Mammary epithelial cell (primary cell): ENCODE measurements at regions of chr14 and their contacts with region 1.

Region 1: DNA sequence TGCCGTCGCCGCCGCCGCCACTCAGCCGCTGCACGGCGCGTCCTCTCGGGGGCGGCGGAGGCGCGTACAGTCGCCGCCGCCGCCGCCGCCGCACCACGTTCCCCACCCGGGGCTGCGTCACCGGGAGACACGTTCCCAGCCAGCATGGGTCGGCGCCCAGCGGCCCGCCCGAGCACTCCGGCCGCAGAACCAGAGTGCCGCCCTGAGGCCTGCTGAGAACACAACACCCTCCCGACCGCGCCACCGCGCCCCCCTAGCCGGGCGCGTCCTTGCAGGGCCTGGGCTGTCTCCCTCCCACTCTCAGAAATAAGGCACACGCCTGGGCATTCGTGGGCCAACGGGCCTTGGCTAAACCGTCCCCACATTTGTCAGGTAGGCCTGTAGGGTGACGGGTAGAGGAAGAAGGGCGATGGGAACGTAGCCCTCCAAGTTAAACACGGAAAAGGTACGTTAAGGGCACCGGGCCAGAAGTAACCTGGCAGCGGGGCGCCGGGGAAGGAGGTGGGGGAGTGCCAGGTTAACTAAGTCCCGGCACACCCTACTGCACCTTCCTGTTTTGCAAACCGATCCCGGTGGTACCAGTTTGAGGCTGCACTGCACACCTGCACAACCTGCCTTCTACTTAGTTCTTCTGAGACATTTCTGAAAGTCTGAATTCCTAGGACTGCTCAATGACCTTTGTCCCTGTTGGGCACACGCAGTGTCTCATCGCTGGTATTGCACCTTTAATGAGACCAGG is at the start of gene MAP4K5:
- DNase-seq: peak; percentile 86
- H3K4me3 ChIP-seq: peak within 1 kb of the TSS; percentile 90 to 93 (median 92)
- H3K27ac ChIP-seq: peak within 1 kb of the TSS; percentile 86
- H3K4me1 ChIP-seq: peaks cover 42% of the 10 kb centered on the region
- H3K27me3 ChIP-seq: no peaks in the 10 kb centered on the region
- CTCF ChIP-seq: peak; percentile 73 to 89
- total RNA-seq, gene MAP4K5: 67.6 to 123 TPM

Region 2: DNA sequence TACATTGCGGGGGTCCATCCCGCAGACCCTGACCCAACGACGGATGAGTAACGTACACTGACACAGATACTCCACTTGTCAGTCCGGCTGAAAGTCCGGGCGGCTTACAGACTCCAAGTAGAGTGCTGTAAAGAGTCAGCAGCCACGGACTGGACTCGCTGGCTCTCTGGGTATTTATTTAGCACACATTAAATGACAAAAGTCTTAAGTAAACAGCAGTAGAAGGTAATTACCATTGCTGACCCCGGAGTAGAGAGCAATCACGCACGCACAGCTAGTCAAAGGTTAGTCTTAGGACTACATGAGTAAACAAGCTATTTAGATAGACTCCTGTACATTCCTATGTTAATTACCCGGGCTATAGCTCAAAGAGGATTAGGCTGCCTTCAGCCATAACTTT is 1727.4 kb before region 1 on chr14:
- CTCF ChIA-PET with region 1: no interaction called
- dilution Hi-C with region 1: no loop called
- in situ Hi-C with region 1: no loop called
- intact Hi-C with region 1: no loop called
- DNase-seq: no peak
- H3K4me3 ChIP-seq: no peak overlapping the region
- H3K27ac ChIP-seq: no peak overlapping the region
- H3K4me1 ChIP-seq: no peaks in the 10 kb centered on the region
- H3K27me3 ChIP-seq: no peaks in the 10 kb centered on the region
- CTCF ChIP-seq: no peak

Region 3: DNA sequence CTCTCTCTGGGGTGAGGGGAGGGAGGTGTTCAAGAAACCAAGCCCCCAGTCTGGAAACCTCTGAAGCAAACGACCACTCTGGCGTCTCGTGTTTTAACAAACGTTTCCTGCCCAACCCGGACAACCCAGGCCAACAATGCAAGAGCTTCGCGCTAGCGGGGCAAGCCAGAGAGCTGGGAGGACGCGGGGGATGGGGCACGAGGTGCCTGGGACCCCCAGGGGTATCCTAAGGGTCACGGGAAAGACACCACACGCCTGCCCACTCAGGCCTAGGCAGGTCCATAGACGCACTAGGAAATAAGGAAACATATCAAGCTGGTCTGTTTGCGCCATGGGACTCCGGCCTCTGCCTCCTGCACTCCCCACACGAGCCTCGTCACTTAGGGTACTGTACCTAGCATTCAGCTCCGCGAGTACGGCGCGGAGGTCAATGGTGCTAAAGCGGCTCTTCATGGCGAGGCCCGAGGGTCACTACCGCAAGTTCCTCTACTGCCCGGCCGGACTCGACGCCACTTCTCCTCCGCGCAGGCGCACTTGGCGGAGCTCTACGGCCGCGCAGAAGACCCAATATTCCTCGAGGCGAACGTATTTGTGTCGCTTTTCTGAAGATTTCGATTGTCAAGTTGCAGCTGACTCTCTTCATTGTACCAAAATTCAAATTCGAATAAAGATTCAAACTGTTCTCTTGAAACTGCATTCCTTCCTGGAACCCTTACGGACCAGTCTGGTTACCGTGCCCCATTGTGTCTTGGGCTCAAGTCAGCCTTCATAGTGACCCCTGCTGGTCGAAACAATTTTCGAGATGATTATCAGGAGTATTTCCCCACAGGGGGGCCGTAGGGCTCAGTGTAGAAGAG is 680.1 kb before region 1 on chr14 and contains the start of gene NEMF:
- CTCF ChIA-PET with region 1: no interaction called
- dilution Hi-C with region 1: no loop called
- in situ Hi-C with region 1: loop called in 1 of 2 experiments (anchors 25 kb)
- intact Hi-C with region 1: no loop called
- DNase-seq: peak; percentile 83
- H3K4me3 ChIP-seq: peak within 1 kb of the TSS; percentile 54 to 96 (median 65)
- H3K27ac ChIP-seq: peak within 1 kb of the TSS; percentile 77
- H3K4me1 ChIP-seq: peaks cover 7% of the 10 kb centered on the region
- H3K27me3 ChIP-seq: no peaks in the 10 kb centered on the region
- CTCF ChIP-seq: peak; percentile 76 to 77
- total RNA-seq, gene NEMF: 44.8 to 57.7 TPM

Region 4: GRCh38 chr14:49892636-49893308 is 639.9 kb before region 1 on chr14 and contains the start of gene ARF6:
- CTCF ChIA-PET with region 1: no interaction called
- dilution Hi-C with region 1: no loop called
- in situ Hi-C with region 1: no loop called
- intact Hi-C with region 1: loop called (anchors 5 kb)
- DNase-seq: peak; percentile 97
- H3K4me3 ChIP-seq: peak within 1 kb of the TSS; percentile 87 to 100 (median 96)
- H3K27ac ChIP-seq: peak within 1 kb of the TSS; percentile 94
- H3K4me1 ChIP-seq: peaks cover 11% of the 10 kb centered on the region
- H3K27me3 ChIP-seq: no peaks in the 10 kb centered on the region
- CTCF ChIP-seq: peak in 1 of 2 donors; percentile 39
- total RNA-seq, gene ARF6: 85.5 to 132 TPM

Region 5: GRCh38 chr14:50231475-50232275 is 301.0 kb before region 1 on chr14 and contains the start of gene SOS2:
- CTCF ChIA-PET with region 1: no interaction called
- dilution Hi-C with region 1: no loop called
- in situ Hi-C with region 1: no loop called
- intact Hi-C with region 1: loop called (anchors 5 kb)
- DNase-seq: peak; percentile 86
- H3K4me3 ChIP-seq: peak within 1 kb of the TSS; percentile 86 to 93 (median 91)
- H3K27ac ChIP-seq: peak within 1 kb of the TSS; percentile 83
- H3K4me1 ChIP-seq: peaks cover 8% of the 10 kb centered on the region
- H3K27me3 ChIP-seq: no peaks in the 10 kb centered on the region
- CTCF ChIP-seq: peak in 1 of 2 donors; percentile 10
- total RNA-seq, gene SOS2: 19.6 to 35.2 TPM

Region 6: GRCh38 chr14:50285861-50286260 is 246.8 kb before region 1 on chr14:
- CTCF ChIA-PET with region 1: no interaction called
- dilution Hi-C with region 1: no loop called
- in situ Hi-C with region 1: no loop called
- intact Hi-C with region 1: no loop called
- DNase-seq: no peak
- H3K4me3 ChIP-seq: no peak overlapping the region
- H3K27ac ChIP-seq: no peak overlapping the region
- H3K4me1 ChIP-seq: no peaks in the 10 kb centered on the region
- H3K27me3 ChIP-seq: no peaks in the 10 kb centered on the region
- CTCF ChIP-seq: no peak

Region 7: DNA sequence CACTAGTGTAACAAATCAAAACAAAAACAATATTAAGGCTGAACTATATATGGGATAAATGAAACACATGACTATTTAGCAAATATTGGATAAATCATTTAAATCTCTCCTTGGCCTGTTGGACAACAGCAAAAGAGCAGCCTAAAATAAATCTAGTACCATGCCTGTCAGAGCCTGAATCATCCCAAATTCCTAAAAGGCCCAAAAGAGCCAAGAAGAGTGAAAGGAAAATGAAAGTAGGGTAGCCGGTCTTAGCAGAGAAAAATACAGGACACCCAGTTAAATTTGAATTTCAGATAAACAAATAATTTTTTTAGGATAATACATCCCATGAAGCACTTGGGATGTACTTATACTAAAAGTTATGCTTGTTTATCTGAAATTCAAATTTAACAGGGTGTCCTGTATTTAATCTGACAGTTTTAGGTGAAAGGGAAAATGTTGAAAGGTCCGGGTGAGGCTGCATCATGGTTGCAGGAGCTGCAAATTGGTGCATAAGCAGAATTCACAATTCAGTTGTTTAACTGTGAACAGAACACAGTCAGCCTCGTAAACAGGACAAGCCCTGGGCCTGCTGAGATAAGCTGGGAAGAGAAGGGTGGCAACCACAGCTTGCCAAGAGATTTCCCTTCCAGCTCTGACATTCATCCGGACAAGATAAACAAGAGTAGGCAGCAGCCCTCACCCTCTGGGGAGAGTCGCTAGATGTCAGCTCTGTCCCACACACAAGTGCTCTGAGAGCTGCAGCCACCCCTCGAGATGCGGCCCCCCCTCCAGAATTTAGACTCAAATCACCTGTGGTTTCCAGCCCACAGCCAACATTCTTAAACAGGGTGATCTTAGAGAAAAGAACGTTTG is 190.2 kb before region 1 on chr14:
- CTCF ChIA-PET with region 1: interaction called, 6 read pairs
- dilution Hi-C with region 1: no loop called
- in situ Hi-C with region 1: loop called in 1 of 2 experiments (anchors 10 kb)
- intact Hi-C with region 1: loop called (anchors 1 kb)
- DNase-seq: peak; percentile 75
- H3K4me3 ChIP-seq: no peak overlapping the region
- H3K27ac ChIP-seq: peak overlapping the region; percentile 5
- H3K4me1 ChIP-seq: peaks cover 32% of the 10 kb centered on the region
- H3K27me3 ChIP-seq: no peaks in the 10 kb centered on the region
- CTCF ChIP-seq: peak; percentile 41 to 75

Region 8: GRCh38 chr14:50425816-50426215 is 106.9 kb before region 1 on chr14:
- CTCF ChIA-PET with region 1: no interaction called
- dilution Hi-C with region 1: no loop called
- in situ Hi-C with region 1: no loop called
- intact Hi-C with region 1: no loop called
- DNase-seq: no peak
- H3K4me3 ChIP-seq: no peak overlapping the region
- H3K27ac ChIP-seq: no peak overlapping the region
- H3K4me1 ChIP-seq: no peaks in the 10 kb centered on the region
- H3K27me3 ChIP-seq: no peaks in the 10 kb centered on the region
- CTCF ChIP-seq: no peak

Region 9: GRCh38 chr14:50447461-50447860 is 85.2 kb before region 1 on chr14:
- CTCF ChIA-PET with region 1: no interaction called
- dilution Hi-C with region 1: loop called (anchors 5 kb)
- in situ Hi-C with region 1: no loop called
- intact Hi-C with region 1: no loop called
- DNase-seq: peak; percentile 65
- H3K4me3 ChIP-seq: no peak overlapping the region
- H3K27ac ChIP-seq: peak overlapping the region; percentile 66
- H3K4me1 ChIP-seq: peaks cover 10% of the 10 kb centered on the region
- H3K27me3 ChIP-seq: no peaks in the 10 kb centered on the region
- CTCF ChIP-seq: no peak